ENCODE measurements at regions of chr1 and their contacts with region 1.

Region 1: DNA sequence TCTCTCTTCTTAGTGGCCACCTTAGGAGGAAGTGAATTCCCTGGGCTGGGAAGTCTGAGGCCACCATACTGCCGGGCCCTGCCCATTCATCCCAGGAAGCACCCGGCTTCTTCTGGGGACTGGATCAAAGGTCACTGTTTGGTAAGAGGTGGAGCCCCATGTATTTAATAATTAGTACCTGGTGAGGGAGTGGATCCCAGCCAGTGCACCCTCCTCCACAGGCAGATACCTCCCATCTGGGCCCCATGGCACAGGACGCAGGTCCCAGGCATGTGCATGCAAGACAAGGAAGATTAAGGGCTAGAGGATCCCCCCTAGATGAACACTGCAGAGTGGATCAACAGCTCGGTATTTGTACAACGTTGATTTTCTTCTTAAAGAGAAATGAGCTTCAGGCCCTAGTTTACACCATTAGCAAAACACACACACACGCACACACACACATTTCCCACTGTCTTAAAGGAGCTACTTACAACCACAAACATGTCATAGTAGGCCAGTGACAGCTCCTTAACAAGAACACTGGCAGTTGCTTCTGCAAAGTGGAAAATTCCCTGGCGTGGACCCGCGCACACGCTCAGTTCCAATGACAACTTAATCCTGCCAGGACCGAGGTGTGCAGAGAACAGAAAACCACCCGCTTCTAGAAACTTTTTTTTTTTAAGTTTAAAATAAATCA is 90.7 kb downstream of the MRPL37 start:
- DNase-seq: no peak
- H3K4me3 ChIP-seq: no peak overlapping the region
- H3K27ac ChIP-seq: no peak overlapping the region
- H3K4me1 ChIP-seq: no peaks in the 10 kb centered on the region; the same call in 1 of the 2 replicates
- H3K27me3 ChIP-seq: no peaks in the 10 kb centered on the region
- CTCF ChIP-seq: no peak

Region 2: DNA sequence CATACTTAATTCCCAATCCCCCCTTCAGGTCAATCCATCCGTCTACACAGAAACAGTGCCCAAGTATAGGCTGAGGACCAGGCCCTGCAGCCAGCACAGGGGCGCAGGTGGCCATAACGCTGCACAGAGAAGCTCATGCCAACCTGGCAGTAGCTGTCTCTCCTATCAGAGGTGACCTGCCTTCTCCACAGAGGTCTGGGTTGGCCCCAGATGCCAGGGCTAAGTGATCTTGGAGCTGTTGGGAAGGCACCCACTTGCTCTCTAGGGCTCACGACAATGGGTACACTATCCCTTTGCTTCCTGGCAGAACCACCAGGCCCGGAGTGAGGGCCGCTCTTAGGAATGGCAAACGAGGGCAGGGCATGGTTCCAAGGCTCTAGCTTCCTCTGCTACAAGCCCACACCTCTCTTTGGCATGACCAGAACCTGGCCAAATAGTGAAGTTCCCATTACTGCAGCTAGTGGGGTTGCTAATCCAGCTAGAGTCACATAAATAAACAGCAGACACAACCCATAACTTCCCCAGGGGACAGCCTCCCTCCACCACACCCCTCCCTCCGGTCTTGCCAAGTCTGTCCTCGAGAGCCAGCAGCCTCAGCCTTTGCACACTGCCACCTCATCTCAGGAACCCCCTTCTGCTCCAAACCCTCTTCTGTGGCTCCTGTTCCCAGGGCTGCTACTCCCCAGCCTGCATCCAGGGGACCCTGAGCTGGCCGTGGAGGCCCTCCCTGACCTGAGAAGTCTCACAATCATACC is 664.7 kb before region 1 on chr1:
- CTCF ChIA-PET with region 1: no interaction called
- POLR2A ChIA-PET with region 1: interaction called, 15 read pairs
- intact Hi-C with region 1: no loop called
- DNase-seq: no peak
- H3K4me3 ChIP-seq: no peak overlapping the region
- H3K27ac ChIP-seq: no peak overlapping the region
- H3K4me1 ChIP-seq: no peaks in the 10 kb centered on the region
- H3K27me3 ChIP-seq: peaks cover 16% of the 10 kb centered on the region
- CTCF ChIP-seq: no peak

Region 3: GRCh38 chr1:54273092-54273794 is 17.4 kb before region 1 on chr1:
- CTCF ChIA-PET with region 1: no interaction called
- POLR2A ChIA-PET with region 1: no interaction called
- intact Hi-C with region 1: no loop called
- DNase-seq: no peak
- H3K4me3 ChIP-seq: no peak overlapping the region
- H3K27ac ChIP-seq: no peak overlapping the region
- H3K4me1 ChIP-seq: no peaks in the 10 kb centered on the region
- H3K27me3 ChIP-seq: no peaks in the 10 kb centered on the region
- CTCF ChIP-seq: no peak